ENCODE measurements at regions of chr13 and their contacts with region 1.

Region 1: GRCh38 chr13:28718543-28719226 is at the start of gene SLC46A3:
- DNase-seq: peak; percentile 97
- H3K4me3 Mint-ChIP-seq: peak within 1 kb of the TSS; percentile 90
- H3K27ac Mint-ChIP-seq: peak within 1 kb of the TSS; percentile 72
- H3K4me1 Mint-ChIP-seq: peaks cover 28% of the 10 kb centered on the region
- H3K27me3 Mint-ChIP-seq: peaks cover 2% of the 10 kb centered on the region
- total RNA-seq, gene SLC46A3: 9.6 to 10.9 TPM

Region 2: GRCh38 chr13:28796938-28797257 is 78.2 kb after region 1 on chr13:
- CTCF ChIA-PET with region 1: interaction called, 11 read pairs
- POLR2A ChIA-PET with region 1: no interaction called
- DNase-seq: no peak
- H3K4me3 Mint-ChIP-seq: no peak overlapping the region
- H3K27ac Mint-ChIP-seq: no peak overlapping the region
- H3K4me1 Mint-ChIP-seq: peaks cover 3% of the 10 kb centered on the region
- H3K27me3 Mint-ChIP-seq: peaks cover 26% of the 10 kb centered on the region

Measured in activated CD4-positive, alpha-beta memory T cell treated with anti-CD3 and anti-CD28 coated beads, Interleukin-2, amount 10 ng/mL, durations not matched to agents 7 days and 5 days (primary cell).